HepG2 (cell line): ENCODE measurements at regions of chr1 and their contacts with region 1.

Region 1: GRCh38 chr1:67853704-67854103 is 20.4 kb upstream of the GNG12 start:
- DNase-seq: peak; percentile 25
- ATAC-seq: peak; percentile 94
- H3K4me3 ChIP-seq: no peak overlapping the region
- H3K27ac ChIP-seq: no peak overlapping the region
- H3K4me1 ChIP-seq: no peaks in the 10 kb centered on the region
- H3K27me3 ChIP-seq: peaks cover 0 to 1% of the 10 kb centered on the region in 2 experiments; a peak in 3 of 5 replicates
- CTCF ChIP-seq: peak; percentile 73
- EP300 ChIP-seq: no peak
- POLR2A ChIP-seq: no peak
- RAD21 ChIP-seq: 0 out of 2 replicates have a peak, but pooled peaks have one; percentile 26

Region 2: GRCh38 chr1:67803380-67804279 is 50.1 kb before region 1 on chr1:
- CTCF ChIA-PET with region 1: no interaction called
- POLR2A ChIA-PET with region 1: no interaction called
- in situ Hi-C with region 1: no loop called
- intact Hi-C with region 1: no loop called
- DNase-seq: no peak
- ATAC-seq: no peak
- H3K4me3 ChIP-seq: no peak overlapping the region
- H3K27ac ChIP-seq: no peak overlapping the region
- H3K4me1 ChIP-seq: no peaks in the 10 kb centered on the region
- H3K27me3 ChIP-seq: peaks cover 0 to 5% of the 10 kb centered on the region in 2 experiments; a peak in 1 of 5 replicates
- CTCF ChIP-seq: no peak
- EP300 ChIP-seq: no peak
- POLR2A ChIP-seq: no peak
- RAD21 ChIP-seq: no peak

Region 3: DNA sequence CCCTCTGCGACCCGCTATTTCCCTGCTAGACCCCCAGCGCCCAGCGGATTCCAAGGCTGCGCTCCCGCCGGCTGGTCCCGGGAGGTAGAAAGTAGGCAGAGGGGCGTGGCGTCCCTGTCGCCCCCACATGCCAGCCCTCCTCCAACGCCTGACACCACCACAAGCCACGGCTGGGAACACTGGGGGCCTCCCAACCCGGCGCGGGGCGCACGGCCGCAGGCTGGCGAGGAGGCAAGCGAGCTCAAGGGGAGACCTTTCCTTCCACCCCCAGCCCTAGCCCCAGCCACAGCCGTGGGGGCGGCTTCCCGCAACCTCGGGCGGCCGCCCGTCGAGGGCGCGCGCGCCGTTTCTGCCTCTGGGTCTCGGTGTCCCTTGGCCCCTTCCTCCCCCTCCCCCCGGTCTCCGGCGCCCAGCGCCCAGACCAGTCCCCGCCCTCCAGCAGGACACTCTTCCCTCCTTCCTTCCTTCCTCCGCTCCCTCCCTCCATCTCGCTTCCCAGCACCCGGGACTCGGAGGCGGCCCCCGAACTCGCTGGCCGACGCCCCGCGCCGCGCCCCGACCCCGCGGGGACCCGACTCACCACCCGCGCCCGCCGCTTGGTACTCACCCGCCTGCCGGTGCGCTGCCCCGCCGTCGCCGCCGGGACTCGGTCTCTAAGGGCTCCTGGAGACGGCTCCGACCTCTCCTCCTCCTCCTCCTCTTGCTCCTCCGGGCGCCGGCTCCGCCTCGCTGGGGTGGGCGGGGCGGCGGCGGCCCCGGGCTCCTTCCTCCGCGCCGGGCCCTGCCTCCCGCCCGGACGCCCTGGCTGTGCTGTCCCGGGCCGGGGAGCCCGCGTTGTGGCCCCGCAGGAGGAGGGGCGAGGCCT is 20.7 kb before region 1 on chr1 and contains the start of gene GNG12:
- CTCF ChIA-PET with region 1: no interaction called
- POLR2A ChIA-PET with region 1: no interaction called
- in situ Hi-C with region 1: no loop called
- intact Hi-C with region 1: no loop called
- DNase-seq: no peak
- ATAC-seq: peak; percentile 72
- H3K4me3 ChIP-seq: peak within 1 kb of the TSS; percentile 34 to 62 (median 39)
- H3K27ac ChIP-seq: no peak within 1 kb of the TSS
- H3K4me1 ChIP-seq: peaks cover 12% of the 10 kb centered on the region
- H3K27me3 ChIP-seq: peaks cover 5 to 45% of the 10 kb centered on the region in 2 experiments
- CTCF ChIP-seq: no peak
- EP300 ChIP-seq: no peak
- POLR2A ChIP-seq: no peak
- RAD21 ChIP-seq: no peak
- total RNA-seq, gene GNG12: 0.11 and 0.17 TPM in 2 replicates

Region 4: DNA sequence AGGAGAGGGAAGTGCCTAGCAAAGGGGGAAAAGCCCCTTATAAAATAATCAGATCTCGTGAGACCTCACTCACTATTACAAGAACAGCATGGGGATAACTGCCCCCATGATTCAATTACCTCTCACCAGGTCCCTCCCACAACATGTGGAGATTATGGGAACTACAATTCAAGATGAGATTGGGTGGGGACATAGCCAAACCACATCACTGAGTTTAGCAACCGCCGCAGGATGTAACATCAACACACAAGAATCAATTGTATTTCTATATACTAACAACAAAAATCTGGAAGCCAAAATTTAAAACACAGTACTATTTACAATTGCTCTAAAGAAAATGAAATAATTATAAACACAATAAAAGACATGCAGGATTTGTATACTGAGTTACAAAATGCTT is 174.9 kb after region 1 on chr1:
- CTCF ChIA-PET with region 1: no interaction called
- POLR2A ChIA-PET with region 1: no interaction called
- in situ Hi-C with region 1: no loop called
- intact Hi-C with region 1: no loop called
- DNase-seq: no peak
- ATAC-seq: no peak
- H3K4me3 ChIP-seq: no peak overlapping the region
- H3K27ac ChIP-seq: no peak overlapping the region
- H3K4me1 ChIP-seq: no peaks in the 10 kb centered on the region
- H3K27me3 ChIP-seq: no peaks in the 10 kb centered on the region
- CTCF ChIP-seq: no peak
- EP300 ChIP-seq: no peak
- POLR2A ChIP-seq: no peak
- RAD21 ChIP-seq: no peak

Region 5: GRCh38 chr1:68111519-68112436 is 258.1 kb after region 1 on chr1:
- CTCF ChIA-PET with region 1: no interaction called
- POLR2A ChIA-PET with region 1: no interaction called
- in situ Hi-C with region 1: loop called (anchors 5 kb)
- intact Hi-C with region 1: loop called (anchors 1 kb)
- DNase-seq: no peak
- ATAC-seq: peak; percentile 93
- H3K4me3 ChIP-seq: no peak overlapping the region
- H3K27ac ChIP-seq: no peak overlapping the region
- H3K4me1 ChIP-seq: peaks cover 1% of the 10 kb centered on the region
- H3K27me3 ChIP-seq: no peaks in the 10 kb centered on the region; a peak in 1 of 5 replicates
- CTCF ChIP-seq: peak; percentile 54
- EP300 ChIP-seq: no peak
- POLR2A ChIP-seq: no peak
- RAD21 ChIP-seq: no peak

Region 6: GRCh38 chr1:68346188-68346808 is 492.6 kb after region 1 on chr1:
- CTCF ChIA-PET with region 1: no interaction called
- POLR2A ChIA-PET with region 1: no interaction called
- in situ Hi-C with region 1: loop called (anchors 10 kb)
- intact Hi-C with region 1: loop called (anchors 2 kb)
- DNase-seq: peak; percentile 4
- ATAC-seq: peak; percentile 25; the same call in 1 of the 3 replicates
- H3K4me3 ChIP-seq: no peak overlapping the region
- H3K27ac ChIP-seq: no peak overlapping the region
- H3K4me1 ChIP-seq: no peaks in the 10 kb centered on the region
- H3K27me3 ChIP-seq: no peaks in the 10 kb centered on the region
- CTCF ChIP-seq: no peak
- EP300 ChIP-seq: no peak
- POLR2A ChIP-seq: no peak
- RAD21 ChIP-seq: no peak